Activated naive CD4-positive, alpha-beta T cell treated with anti-CD3 and anti-CD28 coated beads for 36 hours (primary cell): ENCODE measurements at regions of chr17 and their contacts with region 1.

Region 1: GRCh38 chr17:40018211-40019121 is 3.2 kb downstream of the CSF3 start:
- DNase-seq: no peak
- H3K4me3 Mint-ChIP-seq: no peak overlapping the region
- H3K27ac Mint-ChIP-seq: no peak overlapping the region
- H3K4me1 Mint-ChIP-seq: peaks cover 4% of the 10 kb centered on the region
- H3K27me3 Mint-ChIP-seq: no peaks in the 10 kb centered on the region

Region 2: DNA sequence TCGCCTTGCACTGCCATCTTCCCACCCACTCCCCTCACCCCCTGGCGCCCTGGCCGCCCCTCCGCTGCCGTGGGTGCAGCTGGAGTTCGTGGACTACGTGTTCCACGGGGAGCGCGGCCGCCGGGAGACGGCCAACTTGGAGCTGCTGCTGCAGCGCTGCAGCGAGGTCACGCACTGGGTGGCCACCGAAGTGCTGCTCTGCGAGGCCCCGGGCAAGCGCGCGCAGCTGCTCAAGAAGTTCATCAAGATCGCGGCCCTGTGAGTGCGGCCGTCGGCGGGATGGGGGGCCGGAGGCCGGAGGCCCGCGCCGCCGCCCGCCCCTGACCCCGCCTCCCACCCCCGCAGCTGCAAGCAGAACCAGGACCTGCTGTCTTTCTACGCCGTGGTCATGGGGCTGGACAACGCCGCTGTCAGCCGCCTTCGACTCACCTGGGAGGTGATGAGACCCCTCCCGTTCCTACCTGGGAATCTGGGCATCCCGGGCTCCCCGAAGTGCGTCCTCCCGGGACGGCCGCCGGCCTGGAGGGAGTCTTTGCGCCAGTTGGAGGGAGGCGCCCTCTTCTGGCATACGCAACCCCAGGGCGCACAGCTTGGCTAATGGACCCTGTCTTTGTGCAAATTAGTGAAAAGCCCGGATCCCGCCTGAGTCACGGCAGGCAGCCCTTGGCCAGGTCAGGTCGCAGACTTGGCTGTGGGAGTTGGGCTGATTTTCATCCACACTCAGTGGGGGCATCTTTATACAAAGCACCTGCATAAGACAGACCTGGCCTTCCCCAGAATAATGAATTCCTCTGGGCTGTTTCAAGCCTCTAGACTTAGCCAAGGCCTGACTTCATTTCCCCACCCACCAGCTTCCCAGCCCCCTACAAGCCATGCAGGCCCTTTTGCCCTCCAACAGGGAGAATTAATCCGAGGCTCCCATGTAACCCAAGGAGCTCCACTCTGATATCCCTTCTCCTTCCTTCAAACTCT is 173.1 kb after region 1 on chr17:
- CTCF ChIA-PET with region 1: interaction called, 26 read pairs
- intact Hi-C with region 1: loop called (anchors 1 kb)
- DNase-seq: peak; percentile 79
- H3K4me3 Mint-ChIP-seq: peak overlapping the region; percentile 82
- H3K27ac Mint-ChIP-seq: no peak overlapping the region
- H3K4me1 Mint-ChIP-seq: peaks cover 7% of the 10 kb centered on the region
- H3K27me3 Mint-ChIP-seq: no peaks in the 10 kb centered on the region